ENCODE measurements at regions of chr6 and their contacts with region 1.

Region 1: GRCh38 chr6:137415127-137415833 is 78.9 kb downstream of the OLIG3 start:
- DNase-seq: peak; percentile 58
- ATAC-seq: peak; percentile 89 to 91

Region 2: DNA sequence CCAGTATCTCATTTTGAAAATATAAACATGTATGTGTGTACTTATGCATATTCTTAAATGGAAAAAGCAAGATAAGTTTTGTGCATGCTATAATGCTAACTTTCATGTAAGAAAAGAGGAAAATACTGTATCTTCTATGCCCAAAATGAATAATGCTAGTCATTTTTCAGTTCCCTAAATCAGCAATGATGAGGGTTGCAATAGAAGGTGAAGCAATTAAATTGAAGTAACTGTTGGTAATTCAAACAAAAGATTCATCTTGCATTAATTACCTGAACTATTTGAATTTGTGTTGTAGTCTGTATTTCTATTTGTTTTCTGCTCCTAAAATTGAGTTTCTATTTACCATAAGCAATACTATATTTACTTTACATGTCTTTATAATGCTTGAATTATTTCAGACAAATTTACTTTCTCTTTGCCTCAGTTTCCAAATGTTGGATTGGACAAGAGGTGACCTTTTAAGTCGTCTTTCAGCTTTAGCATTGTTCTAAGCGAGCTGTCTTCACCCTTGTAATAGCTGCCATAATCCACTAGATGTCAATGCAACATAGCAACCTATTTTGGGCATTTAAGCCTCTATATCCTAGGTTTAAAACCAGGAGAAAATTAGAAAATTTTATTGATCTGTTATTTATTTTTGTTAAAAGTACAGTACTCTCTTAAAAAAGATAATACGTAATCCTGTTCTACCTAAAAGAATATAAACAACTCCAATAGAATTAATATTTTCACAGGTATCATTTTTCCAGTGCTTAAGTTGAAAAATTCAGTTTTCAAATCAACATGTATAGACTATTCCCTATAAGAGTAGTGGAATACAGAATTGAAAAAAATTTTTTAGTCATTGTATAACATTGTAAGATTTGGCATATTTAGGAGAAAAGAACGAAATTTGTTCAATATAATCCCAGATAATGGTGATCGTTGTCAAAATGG is 143.8 kb before region 1 on chr6:
- intact Hi-C with region 1: loop called in 1 of 2 experiments (anchors 2 kb)
- DNase-seq: no peak
- ATAC-seq: peak; percentile 55 to 80

Measured in left cardiac atrium (tissue), 4 donors.